ENCODE measurements at regions of chr16 and their contacts with region 1.

Region 1: GRCh38 chr16:28309811-28310311 is 17.5 kb downstream of the SBK1 start:
- DNase-seq: peak; percentile 90
- H3K4me3 Mint-ChIP-seq: peak overlapping the region; percentile 30
- H3K27ac Mint-ChIP-seq: peak overlapping the region; percentile 91
- H3K4me1 Mint-ChIP-seq: peaks cover 40% of the 10 kb centered on the region
- H3K27me3 Mint-ChIP-seq: no peaks in the 10 kb centered on the region

Region 2: GRCh38 chr16:28291873-28292660 is 17.8 kb before region 1 on chr16 and contains the start of gene SBK1:
- CTCF ChIA-PET with region 1: interaction called, 8 read pairs
- POLR2A ChIA-PET with region 1: interaction called, 22 read pairs
- DNase-seq: peak; percentile 86
- H3K4me3 Mint-ChIP-seq: peak within 1 kb of the TSS; percentile 80
- H3K27ac Mint-ChIP-seq: peak within 1 kb of the TSS; percentile 62
- H3K4me1 Mint-ChIP-seq: peaks cover 63% of the 10 kb centered on the region
- H3K27me3 Mint-ChIP-seq: peaks cover 25% of the 10 kb centered on the region
- total RNA-seq, gene SBK1: 9.8 TPM

Region 3: DNA sequence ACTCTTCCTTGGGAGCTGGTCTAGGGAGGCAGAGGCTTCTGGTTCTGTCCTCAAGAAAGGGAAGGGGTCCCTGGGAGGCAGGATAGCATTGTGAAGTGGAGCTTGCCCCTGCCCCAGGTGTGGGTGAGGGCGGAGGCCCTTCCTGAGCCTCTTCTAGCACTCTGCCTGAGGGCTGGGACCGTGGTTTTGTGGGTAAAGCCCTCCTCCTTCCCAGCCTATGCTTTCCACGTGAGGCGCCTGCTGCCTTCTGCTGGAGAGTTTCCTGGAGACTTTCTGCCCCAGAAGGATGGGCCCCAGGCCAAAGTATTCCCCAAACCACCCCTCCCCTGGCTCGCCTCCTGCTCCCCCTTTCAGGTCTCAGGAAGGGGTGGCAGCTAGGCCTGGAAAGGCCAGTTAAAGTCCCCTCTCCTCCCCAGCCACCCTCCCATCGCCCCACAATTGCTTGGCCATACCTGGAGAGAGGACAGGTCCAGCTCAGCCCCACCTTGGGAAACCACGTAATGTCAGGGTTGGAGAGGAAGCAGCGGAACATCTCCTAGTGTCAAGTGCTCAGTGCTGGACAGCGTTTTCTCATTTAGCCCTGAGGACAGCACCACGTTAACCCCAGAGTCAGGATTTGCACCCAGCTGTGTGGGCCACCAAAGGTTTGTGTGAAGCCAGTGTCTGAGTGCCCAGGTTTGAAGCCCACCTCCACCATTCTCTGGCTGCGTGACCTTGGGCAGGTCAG is 11.9 kb before region 1 on chr16:
- CTCF ChIA-PET with region 1: interaction called, 8 read pairs
- POLR2A ChIA-PET with region 1: interaction called, 22 read pairs
- DNase-seq: peak; percentile 47
- H3K4me3 Mint-ChIP-seq: no peak overlapping the region
- H3K27ac Mint-ChIP-seq: peak overlapping the region; percentile 80
- H3K4me1 Mint-ChIP-seq: peaks cover 48% of the 10 kb centered on the region
- H3K27me3 Mint-ChIP-seq: peaks cover 18% of the 10 kb centered on the region

Region 4: DNA sequence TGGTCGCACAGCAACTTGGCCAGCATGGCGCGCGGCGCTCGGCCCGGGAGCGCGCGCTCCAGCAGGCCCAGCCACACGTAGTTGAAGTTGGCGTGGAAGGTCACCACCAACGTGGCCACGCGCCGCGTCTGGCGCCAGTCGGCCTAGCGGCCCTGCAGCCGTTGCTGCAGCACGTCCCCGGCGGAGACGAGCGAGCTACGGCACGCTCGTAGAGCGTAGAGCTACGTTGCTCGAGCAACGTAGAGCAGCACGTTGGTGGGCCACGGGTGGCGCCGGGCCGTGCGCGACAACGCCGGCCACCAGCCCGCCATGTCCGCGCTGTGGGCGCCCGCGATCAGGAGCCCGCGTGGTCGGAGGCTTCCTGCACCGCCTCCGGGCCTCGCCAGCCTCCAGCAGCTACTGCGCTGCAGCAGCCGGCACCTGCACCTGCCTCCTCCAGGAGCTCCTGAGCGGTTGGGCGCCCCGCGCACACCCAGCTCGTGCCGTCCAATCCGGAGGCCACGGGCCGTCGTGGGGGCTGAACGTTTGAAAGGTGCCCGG is 313.4 kb after region 1 on chr16:
- CTCF ChIA-PET with region 1: no interaction called
- POLR2A ChIA-PET with region 1: no interaction called
- DNase-seq: peak; percentile 60
- H3K4me3 Mint-ChIP-seq: peak overlapping the region; percentile 77
- H3K27ac Mint-ChIP-seq: no peak overlapping the region
- H3K4me1 Mint-ChIP-seq: peaks cover 17% of the 10 kb centered on the region
- H3K27me3 Mint-ChIP-seq: peaks cover 16% of the 10 kb centered on the region

Measured in activated CD4-positive, alpha-beta memory T cell treated with anti-CD3 and anti-CD28 coated beads, Interleukin-2, amount 10 ng/mL, durations not matched to agents 7 days and 5 days (primary cell).